ENCODE measurements at regions of chr6 and their contacts with region 1.

Region 1: DNA sequence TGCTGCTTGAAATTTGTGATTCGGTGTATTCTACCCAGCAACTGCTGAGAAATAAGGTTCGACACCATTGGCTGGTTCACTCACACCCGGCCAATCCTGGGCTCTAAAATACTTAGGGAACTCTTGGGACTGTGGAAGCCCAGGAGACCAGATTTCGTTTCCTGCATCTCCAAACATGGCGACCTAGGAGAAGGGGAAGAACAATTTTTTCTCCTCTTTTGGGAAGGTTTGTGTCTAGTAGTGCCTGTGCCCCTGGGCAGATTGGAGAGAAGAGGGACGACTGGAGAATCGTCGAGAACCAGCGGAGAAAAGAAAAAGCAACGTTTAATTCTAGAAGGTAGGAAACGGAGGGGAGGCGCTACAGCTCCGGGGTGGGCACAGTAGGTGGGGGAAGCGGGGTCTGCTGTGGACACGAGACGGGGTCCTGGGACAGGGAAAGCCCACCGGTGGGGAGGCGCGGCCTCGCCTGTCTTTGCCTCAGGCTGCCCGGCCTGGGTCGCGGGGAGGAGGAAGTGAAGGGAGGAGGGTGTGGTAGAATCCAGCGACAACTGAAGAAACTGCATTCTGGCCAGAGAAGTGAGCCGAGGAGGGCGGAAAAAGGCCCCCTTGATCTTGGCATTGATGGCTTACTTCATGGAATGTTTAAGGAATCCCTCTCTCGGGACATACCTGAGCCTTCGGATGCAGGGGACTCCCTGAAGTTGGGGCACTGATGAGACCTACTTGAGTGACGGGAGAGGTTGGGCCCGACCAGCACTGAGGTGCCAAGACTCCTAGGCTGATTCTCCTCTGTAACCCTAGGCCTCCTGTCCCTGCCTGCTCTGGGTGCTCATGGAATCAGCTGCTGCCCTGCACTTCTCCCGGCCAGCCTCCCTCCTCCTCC is at the start of gene BTN2A1:
- DNase-seq: peak; percentile 58 to 81
- ATAC-seq: peak; percentile 99 to 100 (median 100)
- H3K4me3 ChIP-seq: peak within 1 kb of the TSS; percentile 90
- H3K27ac ChIP-seq: peak within 1 kb of the TSS; percentile 93
- H3K4me1 ChIP-seq: peaks cover 27% of the 10 kb centered on the region
- H3K27me3 ChIP-seq: no peaks in the 10 kb centered on the region
- CTCF ChIP-seq: no peak
- total RNA-seq, gene BTN2A1: 7.2 to 11.4 (median 8.4) TPM

Region 2: GRCh38 chr6:26421259-26422144 is 36.5 kb before region 1 on chr6:
- intact Hi-C with region 1: loop called in 1 of 2 experiments (anchors 5 kb)
- DNase-seq: peak; percentile 50 to 74
- ATAC-seq: peak; percentile 98 to 100 (median 98)
- H3K4me3 ChIP-seq: peak overlapping the region; percentile 96
- H3K27ac ChIP-seq: peak overlapping the region; percentile 83
- H3K4me1 ChIP-seq: peaks cover 13% of the 10 kb centered on the region
- H3K27me3 ChIP-seq: no peaks in the 10 kb centered on the region
- CTCF ChIP-seq: no peak